ENCODE measurements at regions of chr11 and their contacts with region 1.

Region 1: GRCh38 chr11:65058012-65058411 is 341 bp downstream of the NAALADL1 start:
- DNase-seq: no peak
- ATAC-seq: no peak
- H3K4me3 ChIP-seq: no peak overlapping the region
- H3K27ac ChIP-seq: no peak overlapping the region
- H3K4me1 ChIP-seq: no peaks in the 10 kb centered on the region
- CTCF ChIP-seq: no peak
- EP300 ChIP-seq: no peak
- POLR2A ChIP-seq: no peak
- RAD21 ChIP-seq: no peak

Region 2: GRCh38 chr11:64489831-64490441 is 568.1 kb before region 1 on chr11:
- CTCF ChIA-PET with region 1: no interaction called
- POLR2A ChIA-PET with region 1: no interaction called
- DNase-seq: peak; percentile 59 to 80
- ATAC-seq: peak; percentile 92 to 98
- H3K4me3 ChIP-seq: no peak overlapping the region
- H3K27ac ChIP-seq: no peak overlapping the region
- H3K4me1 ChIP-seq: no peaks in the 10 kb centered on the region
- CTCF ChIP-seq: peak; percentile 79
- EP300 ChIP-seq: no peak
- POLR2A ChIP-seq: no peak
- RAD21 ChIP-seq: peak; percentile 81 to 82

Region 3: DNA sequence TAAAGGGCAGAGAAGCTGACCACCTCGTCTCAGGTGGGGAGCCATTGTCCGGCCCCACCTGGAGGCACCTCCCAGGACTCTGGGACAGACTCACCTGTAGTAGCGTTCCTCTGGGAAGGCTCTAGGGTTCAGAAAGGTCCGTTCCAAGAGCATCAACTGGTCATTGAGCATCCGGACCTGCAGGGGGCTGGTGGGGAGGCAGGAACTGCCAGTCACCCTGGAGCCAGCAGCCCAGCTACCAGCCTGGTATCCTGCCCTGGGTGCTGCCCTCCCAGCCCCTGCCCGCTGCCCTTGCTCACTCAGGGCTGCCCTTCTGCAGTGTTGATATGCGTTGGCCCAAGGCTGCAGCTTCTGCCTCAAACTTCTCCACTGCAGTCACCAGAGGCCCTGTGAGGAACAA is 12.3 kb before region 1 on chr11:
- CTCF ChIA-PET with region 1: interaction called, 10 read pairs
- POLR2A ChIA-PET with region 1: no interaction called
- DNase-seq: no peak
- ATAC-seq: no peak
- H3K4me3 ChIP-seq: no peak overlapping the region
- H3K27ac ChIP-seq: no peak overlapping the region
- H3K4me1 ChIP-seq: peaks cover 19% of the 10 kb centered on the region
- CTCF ChIP-seq: no peak
- EP300 ChIP-seq: no peak
- POLR2A ChIP-seq: no peak
- RAD21 ChIP-seq: no peak

Region 4: DNA sequence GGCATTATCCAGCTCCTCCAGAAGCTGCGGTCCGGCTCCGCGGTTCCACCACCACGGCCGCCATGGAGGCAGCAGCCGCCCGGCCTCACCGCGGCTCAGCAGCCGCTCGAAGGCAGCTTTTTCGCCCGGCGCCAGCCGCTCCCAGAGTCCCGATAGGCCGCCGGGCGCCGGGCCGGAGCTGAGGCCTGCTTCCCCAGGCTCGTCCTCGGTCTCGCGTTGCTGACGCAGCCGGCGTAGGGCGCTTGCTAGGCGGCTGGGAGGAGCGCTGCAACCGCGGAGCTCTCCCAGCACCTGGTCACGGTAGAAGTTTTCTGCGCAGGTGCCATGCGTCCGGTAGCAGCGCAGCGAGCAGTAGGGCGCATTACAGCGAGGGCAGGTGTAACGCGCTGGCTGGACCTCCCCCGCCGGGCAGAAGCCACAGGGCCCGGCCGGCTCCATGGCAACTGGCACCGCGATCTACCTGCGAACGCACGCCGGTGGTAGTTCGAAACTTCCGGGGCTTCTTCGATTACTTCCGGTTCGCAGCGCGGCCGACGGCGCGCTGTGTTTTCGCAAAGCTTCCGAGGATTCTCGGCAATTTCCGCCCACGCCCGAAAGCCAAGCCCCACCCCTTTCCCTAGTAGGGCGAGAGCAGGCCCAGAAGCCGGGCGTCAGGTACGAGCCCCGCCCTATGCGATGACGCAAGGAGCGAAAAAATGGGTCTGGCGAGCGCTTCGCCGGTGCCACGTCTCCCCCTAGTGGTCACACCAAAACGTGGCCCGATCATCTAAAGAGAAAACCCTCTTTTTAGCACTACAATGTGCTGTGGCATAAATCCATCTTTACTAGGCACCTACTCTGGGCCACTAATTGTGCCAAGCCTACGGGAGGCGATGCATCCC is 59.4 kb after region 1 on chr11 and contains the start of gene ZNHIT2:
- CTCF ChIA-PET with region 1: no interaction called
- POLR2A ChIA-PET with region 1: no interaction called
- DNase-seq: peak; percentile 82 to 98
- ATAC-seq: peak; percentile 55 to 74
- H3K4me3 ChIP-seq: peak within 1 kb of the TSS; percentile 86
- H3K27ac ChIP-seq: peak within 1 kb of the TSS; percentile 93
- H3K4me1 ChIP-seq: peaks cover 34% of the 10 kb centered on the region; the same call in 2 of the 3 replicates
- CTCF ChIP-seq: peak; percentile 88
- EP300 ChIP-seq: no peak
- POLR2A ChIP-seq: peak; percentile 82
- RAD21 ChIP-seq: peak; percentile 80 to 83
- polyA plus RNA-seq, gene ZNHIT2: 5.5 and 6.0 TPM in 2 replicates

Region 5: DNA sequence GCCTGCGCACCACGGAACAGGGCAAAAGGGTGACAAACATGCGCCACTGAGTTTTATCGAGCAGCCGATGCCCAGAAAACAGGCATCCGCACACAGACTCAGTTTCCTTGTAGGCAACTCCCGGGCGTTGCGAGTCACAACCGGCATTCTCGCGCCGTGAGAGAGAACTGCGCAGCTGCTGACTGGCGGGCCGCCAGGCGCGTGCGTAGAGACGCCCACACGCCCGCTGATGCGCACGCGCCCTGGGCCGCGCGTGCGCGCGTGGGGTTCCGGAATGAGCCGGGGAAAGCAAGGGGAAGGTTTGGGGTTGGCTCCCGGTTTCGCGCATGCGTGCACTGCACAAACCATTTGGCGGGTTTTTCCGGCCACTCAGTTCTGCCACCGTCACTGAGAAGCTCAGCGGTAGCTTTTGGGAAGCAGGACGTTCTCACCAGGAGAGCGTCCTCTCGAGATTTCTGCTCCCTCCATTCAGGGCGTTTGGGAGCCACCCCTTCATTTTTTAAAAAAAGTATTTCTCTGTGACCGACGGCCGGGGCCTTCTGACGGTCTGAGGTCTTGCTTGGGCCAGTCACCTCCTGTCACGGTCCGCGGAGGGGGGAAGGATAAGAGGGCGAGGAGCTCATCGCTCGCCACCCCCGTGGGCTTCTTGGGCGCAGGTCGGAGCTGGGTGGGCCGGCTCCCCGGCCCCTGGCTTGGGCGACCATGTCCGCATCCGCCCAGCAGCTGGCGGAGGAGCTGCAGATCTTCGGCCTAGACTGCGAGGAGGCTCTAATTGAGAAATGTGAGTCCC is 203.8 kb after region 1 on chr11 and contains the start of gene POLA2:
- CTCF ChIA-PET with region 1: no interaction called
- POLR2A ChIA-PET with region 1: no interaction called
- DNase-seq: peak; percentile 95 to 96
- ATAC-seq: peak; percentile 79 to 94
- H3K4me3 ChIP-seq: peak within 1 kb of the TSS; percentile 77
- H3K27ac ChIP-seq: peak within 1 kb of the TSS; percentile 82 to 93
- H3K4me1 ChIP-seq: peaks cover 11% of the 10 kb centered on the region
- CTCF ChIP-seq: no peak
- EP300 ChIP-seq: no peak
- POLR2A ChIP-seq: peak; percentile 85
- RAD21 ChIP-seq: no peak
- polyA plus RNA-seq, gene POLA2: 52.3 and 55.6 TPM in 2 replicates

Measured in A549 (cell line).